IMR-90 (cell line): ENCODE measurements at regions of chr7 and their contacts with region 1.

Region 1: DNA sequence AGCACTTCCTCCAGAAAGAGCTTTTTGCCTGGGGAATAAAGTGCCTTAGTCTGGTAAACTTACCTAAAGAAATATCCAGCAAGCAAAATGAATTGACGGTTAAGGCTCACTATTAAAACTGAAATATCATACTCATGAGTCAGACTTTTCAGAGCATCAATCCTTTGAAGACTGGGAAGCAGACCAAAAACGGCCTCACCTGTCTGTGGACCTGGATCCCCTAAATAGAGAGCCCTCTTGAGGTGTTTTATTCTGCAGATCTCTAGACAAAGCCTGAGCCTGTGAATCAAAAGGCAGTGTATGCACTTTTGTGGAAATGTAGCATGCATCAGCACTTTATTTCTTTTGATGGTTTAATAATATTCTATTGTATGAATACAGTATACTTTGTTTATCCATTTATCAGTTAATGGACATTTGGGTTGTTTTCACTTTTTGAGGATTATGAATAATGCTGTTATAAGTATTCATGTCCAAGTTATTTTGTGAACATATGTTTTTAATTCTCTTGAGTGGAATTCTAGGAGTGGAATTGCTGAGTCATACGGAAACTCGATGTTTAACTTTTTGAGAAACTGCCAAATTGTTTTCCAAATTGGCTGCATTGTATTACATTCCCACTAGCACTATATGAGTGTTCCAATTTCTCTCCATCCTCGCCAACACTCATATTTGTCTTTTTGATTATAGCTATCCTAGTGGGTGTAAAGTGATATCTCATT is 449.0 kb upstream of the IGFBP3 start:
- DNase-seq: peak; percentile 91
- ATAC-seq: peak; percentile 75
- H3K4me3 ChIP-seq: no peak overlapping the region
- H3K27ac ChIP-seq: peak overlapping the region; percentile 83; the same call in 1 of the 2 replicates
- H3K4me1 ChIP-seq: peaks cover 3% of the 10 kb centered on the region
- H3K27me3 ChIP-seq: no peaks in the 10 kb centered on the region
- CTCF ChIP-seq: no peak
- POLR2A ChIP-seq: no peak
- RAD21 ChIP-seq: no peak

Region 2: DNA sequence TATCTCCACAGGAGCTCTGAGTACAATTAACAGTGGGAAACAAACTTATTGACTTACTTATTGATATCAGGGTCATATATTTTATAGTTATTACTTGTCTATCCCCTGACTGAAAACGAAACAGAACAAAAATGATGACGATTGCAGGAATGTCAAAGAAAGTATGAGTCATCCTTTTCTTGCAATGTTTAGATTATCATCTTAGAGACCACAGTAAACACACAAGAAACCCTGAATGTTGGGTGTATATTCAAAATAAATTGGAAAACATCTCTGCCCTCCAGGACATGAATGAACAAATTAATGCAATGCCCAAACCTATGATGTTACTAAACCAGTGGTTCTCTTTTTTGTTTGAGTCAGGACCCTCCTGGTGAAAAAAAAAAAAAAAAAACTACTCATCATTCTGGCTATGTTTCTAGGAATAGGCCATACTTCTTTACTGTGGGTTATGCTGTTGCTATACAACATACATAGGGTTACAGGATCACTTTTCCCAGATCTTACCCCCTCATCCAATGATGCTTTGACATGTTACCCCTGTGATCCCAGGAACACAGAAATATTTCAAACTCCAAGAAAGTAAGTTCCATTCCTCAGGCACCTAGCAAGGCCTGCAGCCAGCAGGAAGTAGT is 174.4 kb after region 1 on chr7:
- CTCF ChIA-PET with region 1: no interaction called
- POLR2A ChIA-PET with region 1: no interaction called
- dilution Hi-C with region 1: no loop called
- in situ Hi-C with region 1: no loop called
- intact Hi-C with region 1: loop called (anchors 5 kb)
- DNase-seq: peak; percentile 90
- ATAC-seq: peak; percentile 72
- H3K4me3 ChIP-seq: no peak overlapping the region
- H3K27ac ChIP-seq: peak overlapping the region; percentile 42
- H3K4me1 ChIP-seq: peaks cover 4% of the 10 kb centered on the region; the same call in 1 of the 2 replicates
- H3K27me3 ChIP-seq: no peaks in the 10 kb centered on the region
- CTCF ChIP-seq: no peak
- POLR2A ChIP-seq: no peak
- RAD21 ChIP-seq: no peak; the same call in 1 of the 2 replicates

Region 3: DNA sequence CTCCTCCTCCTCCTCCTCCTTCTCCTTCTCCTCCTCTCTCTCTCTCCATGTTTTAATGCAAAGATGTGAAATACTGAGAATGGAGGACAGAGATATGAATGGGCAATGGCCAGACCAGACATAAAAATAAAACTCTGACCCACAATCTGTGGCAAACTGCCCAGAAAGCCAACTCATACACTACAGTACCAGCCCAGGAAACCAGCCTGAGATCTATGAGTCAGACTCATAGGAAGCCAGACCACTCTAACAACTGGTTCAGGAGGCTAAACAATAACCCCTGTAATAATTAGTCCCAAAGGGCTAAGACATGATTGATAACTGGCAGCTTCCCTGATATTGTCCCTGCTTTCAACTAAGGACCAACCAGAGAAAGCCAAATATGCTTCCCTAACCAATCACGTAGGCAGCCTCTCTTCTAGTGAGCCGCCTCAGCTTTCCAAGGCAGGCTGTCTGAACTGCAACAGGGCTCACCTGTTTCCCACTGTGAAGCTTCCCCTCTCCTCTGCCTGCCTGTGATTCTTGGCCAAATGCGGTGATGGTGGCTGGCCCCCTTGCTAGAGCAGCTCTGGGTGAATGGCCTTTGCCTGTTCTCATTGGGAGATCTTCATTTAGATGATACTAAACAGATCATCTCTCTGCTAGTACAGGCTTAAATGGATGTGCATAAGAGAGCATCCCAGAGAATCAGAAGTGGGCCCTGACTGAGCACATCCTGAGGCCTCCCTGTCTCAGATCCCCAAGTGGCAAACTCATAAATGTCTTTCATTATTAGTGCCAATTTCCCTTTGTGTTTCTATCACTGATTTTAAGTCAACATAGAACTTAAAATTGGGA is 394.2 kb after region 1 on chr7:
- CTCF ChIA-PET with region 1: no interaction called
- POLR2A ChIA-PET with region 1: no interaction called
- dilution Hi-C with region 1: no loop called
- in situ Hi-C with region 1: loop called (anchors 10 kb)
- intact Hi-C with region 1: no loop called
- DNase-seq: peak; percentile 97
- ATAC-seq: peak; percentile 98
- H3K4me3 ChIP-seq: no peak overlapping the region
- H3K27ac ChIP-seq: no peak overlapping the region; the same call in 1 of the 2 replicates
- H3K4me1 ChIP-seq: peaks cover 7% of the 10 kb centered on the region
- H3K27me3 ChIP-seq: no peaks in the 10 kb centered on the region
- CTCF ChIP-seq: no peak
- POLR2A ChIP-seq: no peak
- RAD21 ChIP-seq: no peak

Region 4: DNA sequence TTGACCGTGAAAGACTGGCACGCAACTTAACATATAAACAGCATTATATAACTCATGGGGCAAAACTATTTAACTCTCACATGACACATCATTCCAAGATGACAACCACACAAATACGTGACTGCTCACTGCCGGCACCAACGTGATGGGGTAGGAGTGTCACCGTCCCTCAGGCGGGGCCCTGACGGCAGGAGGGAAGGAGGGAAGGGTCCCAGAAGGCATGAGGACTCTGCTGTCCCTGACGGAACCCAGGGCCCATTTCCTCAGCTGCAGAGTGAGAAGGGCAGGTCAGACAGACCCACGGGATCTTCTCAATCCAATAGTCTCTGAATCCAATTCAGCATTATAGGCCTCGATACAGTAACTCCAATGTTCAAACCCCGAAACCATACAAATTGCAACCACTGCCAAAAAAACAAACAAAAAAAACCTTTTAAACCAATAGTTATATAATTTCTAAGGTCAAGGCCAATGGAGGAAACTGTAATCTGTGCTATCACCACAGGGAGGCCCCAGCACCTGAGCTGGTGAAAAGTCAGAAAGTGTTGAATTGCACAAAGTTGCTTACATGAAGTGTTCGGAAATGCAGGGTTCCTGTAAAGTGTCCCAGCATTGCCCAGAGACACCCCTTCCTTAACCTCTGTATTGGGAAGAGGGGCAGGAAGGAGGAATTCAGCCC is 1074.4 kb after region 1 on chr7:
- CTCF ChIA-PET with region 1: no interaction called
- POLR2A ChIA-PET with region 1: no interaction called
- dilution Hi-C with region 1: no loop called
- in situ Hi-C with region 1: no loop called
- intact Hi-C with region 1: no loop called
- DNase-seq: no peak
- ATAC-seq: 0 out of 2 replicates have a peak, but pooled peaks have one; percentile 31
- H3K4me3 ChIP-seq: no peak overlapping the region
- H3K27ac ChIP-seq: no peak overlapping the region
- H3K4me1 ChIP-seq: peaks cover 12% of the 10 kb centered on the region
- H3K27me3 ChIP-seq: no peaks in the 10 kb centered on the region
- CTCF ChIP-seq: peak; percentile 47
- POLR2A ChIP-seq: no peak
- RAD21 ChIP-seq: peak; percentile 58